ENCODE measurements at regions of chr19 and their contacts with region 1.

Region 1: DNA sequence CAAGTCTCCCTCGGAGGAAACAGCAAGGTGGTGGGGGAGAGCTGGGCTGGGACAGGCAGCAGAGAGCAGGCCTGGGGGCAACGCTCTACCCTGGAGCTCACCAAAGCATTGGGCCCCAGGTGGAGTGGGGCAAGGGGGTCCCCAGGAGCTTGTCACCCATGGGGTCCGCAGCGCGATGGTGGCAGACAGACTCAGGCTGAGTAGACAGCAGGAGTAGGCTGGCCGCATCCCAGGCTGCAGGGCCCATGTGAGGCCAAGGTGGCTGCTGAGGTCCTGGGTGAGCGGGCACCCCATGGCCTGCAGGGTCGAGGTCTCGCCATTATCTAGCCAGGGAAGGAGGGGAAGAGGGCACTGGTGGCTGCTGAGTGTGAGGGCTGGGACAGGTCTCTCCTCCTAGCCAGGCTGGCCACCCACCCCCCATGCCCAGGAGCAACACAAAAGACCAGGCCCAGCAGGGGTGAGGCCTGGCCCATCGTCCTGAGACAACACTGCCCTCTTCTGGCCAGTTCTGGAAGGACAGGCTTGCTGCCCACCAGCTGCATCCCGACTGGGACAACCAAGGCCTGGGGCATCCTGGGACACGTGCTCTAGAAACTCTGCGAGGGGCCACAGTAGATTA is 33.1 kb downstream of the CEBPG start:
- DNase-seq: peak; percentile 75
- ATAC-seq: peak; percentile 85
- H3K4me3 Mint-ChIP-seq: no peak overlapping the region
- H3K27ac Mint-ChIP-seq: no peak overlapping the region
- H3K4me1 Mint-ChIP-seq: no peaks in the 10 kb centered on the region
- H3K27me3 Mint-ChIP-seq: no peaks in the 10 kb centered on the region
- CTCF ChIP-seq: no peak

Region 2: DNA sequence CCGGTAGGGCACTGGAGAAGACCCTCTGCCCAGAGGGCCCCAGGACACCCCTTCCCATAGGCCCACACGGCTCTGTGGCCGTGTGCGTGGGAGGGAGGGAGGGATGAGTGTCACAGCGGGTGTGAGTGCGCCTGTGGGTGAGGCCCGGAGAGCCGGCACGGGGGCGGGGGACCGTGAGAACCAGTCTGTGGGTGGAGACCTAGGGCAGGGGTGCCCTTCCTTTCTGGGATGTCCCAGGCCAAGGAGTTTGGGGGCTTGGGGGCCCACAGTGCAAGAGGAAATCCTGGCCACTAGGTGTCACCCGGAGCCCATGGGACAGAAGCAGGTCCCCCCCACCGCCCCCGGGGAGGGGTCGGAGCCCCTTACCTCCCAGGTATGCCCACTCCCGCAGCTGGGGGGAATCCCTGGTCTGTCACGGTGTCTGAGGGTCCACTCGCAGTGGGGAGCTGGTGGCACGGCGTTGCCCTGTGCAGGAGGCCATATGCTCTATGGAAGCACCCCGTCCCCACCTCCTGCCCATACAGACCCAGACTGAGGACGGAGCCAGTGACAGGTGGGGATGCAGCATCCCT is 165.0 kb before region 1 on chr19:
- CTCF ChIA-PET with region 1: interaction called, 72 read pairs
- POLR2A ChIA-PET with region 1: no interaction called
- intact Hi-C with region 1: loop called (anchors 1 kb)
- DNase-seq: no peak
- ATAC-seq: no peak
- H3K4me3 Mint-ChIP-seq: no peak overlapping the region
- H3K27ac Mint-ChIP-seq: no peak overlapping the region
- H3K4me1 Mint-ChIP-seq: no peaks in the 10 kb centered on the region
- H3K27me3 Mint-ChIP-seq: peaks cover 2% of the 10 kb centered on the region
- CTCF ChIP-seq: no peak

Measured in activated B cell treated with CpG ODN at 0.5 μM for 24 hours (primary cell).